Sigmoid colon (tissue), 7 donors: ENCODE measurements at regions of chr12 and their contacts with region 1.

Region 1: DNA sequence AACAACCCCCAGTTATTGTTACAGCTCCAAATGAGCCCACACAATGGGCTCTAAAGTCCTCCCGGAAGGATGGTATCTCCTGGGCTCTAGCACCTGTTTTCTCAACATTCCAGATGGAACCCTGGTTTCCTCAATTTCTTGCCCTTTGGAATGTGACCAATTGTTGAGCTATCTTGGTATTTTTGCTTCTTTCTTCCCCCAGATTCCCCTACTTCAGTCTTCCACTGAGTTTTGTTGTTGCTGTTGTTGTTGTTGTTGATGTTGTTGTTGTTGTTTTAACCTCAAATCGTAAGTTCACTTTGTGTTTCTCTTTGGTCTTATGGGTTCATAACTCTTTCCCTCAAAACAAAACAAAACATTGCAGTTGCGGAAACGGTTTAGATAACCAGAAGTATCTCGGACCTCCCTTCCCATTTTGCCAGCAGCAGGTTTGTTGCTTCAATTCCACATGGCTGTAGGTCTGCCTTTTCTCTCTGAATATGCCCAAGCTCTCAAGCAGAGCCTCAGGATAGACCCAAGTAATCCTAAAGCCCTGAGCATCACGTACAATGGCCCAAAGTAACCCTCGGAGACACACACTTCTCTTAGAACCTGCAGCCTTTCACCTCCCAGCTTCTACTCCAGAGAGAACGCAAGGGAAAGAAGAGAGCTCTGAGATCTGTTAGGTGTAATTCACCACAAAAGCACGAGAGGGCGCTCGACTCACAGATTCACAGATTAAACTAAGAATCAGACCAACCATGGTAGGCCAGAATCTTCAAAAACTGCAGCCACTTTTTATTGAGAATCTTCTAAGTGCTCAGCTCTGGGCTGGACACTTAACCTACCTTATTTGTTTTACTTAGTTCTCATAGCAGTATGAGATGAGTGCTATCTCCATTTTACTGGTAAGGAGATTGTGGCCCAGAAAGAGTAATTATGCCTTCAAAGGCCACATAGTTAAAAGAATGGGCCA is 1.0 kb upstream of the DDX23 start:
- DNase-seq: peak; percentile 94
- H3K4me3 ChIP-seq: peak overlapping the region; percentile 22 to 92 (median 85)
- H3K27ac ChIP-seq: peak overlapping the region; percentile 80 to 89 (median 86)
- H3K4me1 ChIP-seq: peaks cover 0 to 33% (median 24%) of the 10 kb centered on the region in 4 donors
- H3K27me3 ChIP-seq: no peaks in the 10 kb centered on the region
- CTCF ChIP-seq: peak; percentile 81 to 92 (median 90)
- EP300 ChIP-seq: no peak
- POLR2A ChIP-seq: no peak

Region 2: GRCh38 chr12:48681738-48682532 is 171.1 kb before region 1 on chr12 and contains the start of gene KANSL2:
- intact Hi-C with region 1: no loop called
- DNase-seq: peak; percentile 100
- H3K4me3 ChIP-seq: peak within 1 kb of the TSS; percentile 64 to 89 (median 79)
- H3K27ac ChIP-seq: peak within 1 kb of the TSS; percentile 85 to 96 (median 92)
- H3K4me1 ChIP-seq: peaks cover 0 to 53% (median 44%) of the 10 kb centered on the region in 4 donors
- H3K27me3 ChIP-seq: no peaks in the 10 kb centered on the region
- CTCF ChIP-seq: no peak
- EP300 ChIP-seq: no peak
- POLR2A ChIP-seq: peak; percentile 99
- total RNA-seq, gene KANSL2: 28.2 to 63.0 (median 37.0) TPM

Region 3: GRCh38 chr12:48890657-48891418 is 37.8 kb after region 1 on chr12:
- intact Hi-C with region 1: loop called (anchors 1 kb)
- DNase-seq: peak; percentile 88
- H3K4me3 ChIP-seq: peak overlapping the region in 3 of 4 donors; percentile 25 to 44 (median 32)
- H3K27ac ChIP-seq: peak overlapping the region in 1 of 4 donors; percentile 12
- H3K4me1 ChIP-seq: peaks cover 0 to 9% (median 5%) of the 10 kb centered on the region in 4 donors
- H3K27me3 ChIP-seq: peaks cover 0 to 4% (median 0%) of the 10 kb centered on the region in 3 donors
- CTCF ChIP-seq: peak; percentile 85 to 95 (median 86)
- EP300 ChIP-seq: no peak
- POLR2A ChIP-seq: no peak